Adrenal gland (tissue), 19 donors: ENCODE measurements at regions of chr7 and their contacts with region 1.

Region 1: GRCh38 chr7:139620676-139621344 is 97.3 kb downstream of the CLEC2L start:
- DNase-seq: peak in 4 of 7 donors; percentile 31 to 45 (median 38)
- H3K4me3 ChIP-seq: no peak overlapping the region
- H3K27ac ChIP-seq: no peak overlapping the region
- H3K4me1 ChIP-seq: no peaks in the 10 kb centered on the region
- H3K27me3 ChIP-seq: no peaks in the 10 kb centered on the region
- CTCF ChIP-seq: peak; percentile 29 to 53 (median 48)
- POLR2A ChIP-seq: no peak

Region 2: DNA sequence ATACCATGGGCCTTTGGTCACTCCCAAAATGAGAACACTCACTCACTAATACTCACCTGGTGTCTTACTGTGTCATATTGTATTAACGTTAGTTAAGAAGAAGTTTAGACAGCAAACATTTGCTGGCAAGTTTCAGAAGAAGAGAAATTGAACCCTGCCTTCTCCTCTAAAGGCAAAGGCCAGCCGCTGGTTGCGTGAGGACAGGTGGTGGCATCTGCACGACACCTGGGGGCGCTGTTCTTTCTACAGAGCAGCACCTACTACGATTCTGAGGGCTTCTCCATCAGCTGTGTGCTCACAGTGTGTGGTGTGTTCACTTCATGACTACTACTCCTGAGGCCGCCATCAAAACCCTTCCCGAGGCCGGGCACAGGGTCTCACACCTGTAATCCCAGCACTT is 115.2 kb before region 1 on chr7:
- intact Hi-C with region 1: loop called in 1 of 2 experiments (anchors 10 kb)
- DNase-seq: no peak
- H3K4me3 ChIP-seq: no peak overlapping the region
- H3K27ac ChIP-seq: no peak overlapping the region
- H3K4me1 ChIP-seq: no peaks in the 10 kb centered on the region
- H3K27me3 ChIP-seq: no peaks in the 10 kb centered on the region
- CTCF ChIP-seq: no peak
- POLR2A ChIP-seq: no peak